Heart left ventricle (tissue), 16 donors: ENCODE measurements at regions of chr10 and their contacts with region 1.

Region 1: DNA sequence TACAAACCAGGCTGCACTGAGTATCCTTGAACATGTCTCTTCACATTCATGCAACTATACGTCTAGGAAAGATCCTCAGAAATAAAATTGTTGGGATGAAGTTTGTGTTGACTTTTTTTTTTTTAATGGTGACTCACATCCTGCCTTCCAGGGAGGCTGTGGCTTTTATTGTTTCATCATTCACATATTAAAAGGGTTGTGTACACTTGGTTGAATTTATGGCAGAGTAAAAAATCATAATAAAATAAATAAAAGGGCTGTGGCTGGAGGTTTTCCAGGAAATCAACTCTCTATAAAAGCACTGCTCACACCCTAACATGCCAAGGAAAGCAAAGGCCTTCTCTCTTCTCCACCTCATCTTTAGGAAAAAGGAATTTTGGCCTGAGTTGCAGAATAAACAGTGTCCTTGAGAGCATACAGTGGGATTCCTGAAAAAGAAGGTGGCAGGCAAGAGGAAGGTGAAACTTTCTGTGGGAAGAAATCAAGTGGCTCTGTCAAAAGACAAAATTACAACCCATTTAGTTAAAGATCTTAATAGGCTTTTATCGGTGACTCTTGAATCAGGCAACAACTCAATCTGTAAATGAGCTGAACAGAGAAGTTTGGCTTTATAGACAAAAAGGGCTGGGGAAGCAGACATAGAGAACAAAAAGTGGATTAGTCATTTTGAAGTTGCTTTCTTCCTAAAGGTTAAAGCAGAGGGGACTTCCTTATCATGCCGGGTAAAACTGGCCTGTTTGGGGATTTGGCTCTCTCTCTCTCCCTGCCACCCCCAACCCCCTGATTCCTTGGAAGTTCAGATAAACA is 41.6 kb upstream of the FHIP2A start:
- DNase-seq: no peak
- ATAC-seq: peak in 2 of 4 donors; percentile 38 to 70
- H3K4me3 ChIP-seq: no peak overlapping the region
- H3K27ac ChIP-seq: peak overlapping the region in 9 of 12 donors; percentile 7 to 50 (median 27)
- H3K4me1 ChIP-seq: peaks cover 0 to 37% (median 11%) of the 10 kb centered on the region in 12 donors
- H3K27me3 ChIP-seq: no peaks in the 10 kb centered on the region
- CTCF ChIP-seq: no peak
- POLR2A ChIP-seq: no peak

Region 2: DNA sequence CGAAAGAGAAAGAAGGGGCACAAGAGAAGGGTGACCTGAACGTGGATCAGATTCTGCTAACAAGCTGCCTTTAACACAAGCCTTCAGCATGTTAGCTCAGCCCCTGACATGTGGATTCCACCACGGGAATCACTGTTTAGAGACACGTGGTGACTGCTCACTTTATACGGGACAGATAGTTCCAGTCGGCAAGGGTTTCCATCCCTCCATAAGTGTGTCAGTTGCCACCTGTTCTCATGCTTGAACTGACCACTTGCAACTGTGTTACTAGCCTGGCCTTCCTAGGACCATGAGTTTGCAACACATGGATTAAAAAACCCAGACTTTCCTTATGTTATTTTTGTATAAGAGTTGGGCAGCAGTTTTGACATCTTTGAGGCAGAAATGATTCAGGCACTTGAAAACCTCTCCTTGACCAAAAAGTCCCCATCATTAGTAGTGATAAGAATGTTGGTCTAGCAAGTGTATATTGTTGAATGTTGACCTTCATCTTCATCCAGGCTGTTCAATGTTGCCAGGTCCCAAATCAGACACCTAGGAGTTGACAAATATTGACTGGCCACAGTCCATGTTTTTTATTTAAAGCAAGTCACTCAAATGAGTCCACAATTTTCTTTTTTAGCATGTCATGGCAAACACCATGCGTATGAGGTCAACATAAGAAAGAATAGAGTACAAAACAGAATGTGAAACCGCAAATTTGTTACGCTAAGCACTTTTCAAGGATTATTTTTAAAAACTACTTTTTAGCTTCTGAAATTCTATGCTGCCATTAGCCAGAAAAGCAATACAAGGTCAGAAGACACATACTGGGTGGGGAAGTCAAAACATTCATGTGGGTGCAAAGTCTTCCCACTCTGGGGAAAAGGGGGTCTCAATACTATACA is 223.5 kb before region 1 on chr10:
- intact Hi-C with region 1: loop called in 7 of 10 experiments (anchors 2 to 5 kb)
- DNase-seq: no peak
- ATAC-seq: peak; percentile 32 to 36 (median 35)
- H3K4me3 ChIP-seq: no peak overlapping the region
- H3K27ac ChIP-seq: peak overlapping the region; percentile 47 to 89 (median 70)
- H3K4me1 ChIP-seq: peaks cover 4 to 94% (median 52%) of the 10 kb centered on the region in 12 donors
- H3K27me3 ChIP-seq: no peaks in the 10 kb centered on the region
- CTCF ChIP-seq: no peak
- POLR2A ChIP-seq: no peak

Region 3: DNA sequence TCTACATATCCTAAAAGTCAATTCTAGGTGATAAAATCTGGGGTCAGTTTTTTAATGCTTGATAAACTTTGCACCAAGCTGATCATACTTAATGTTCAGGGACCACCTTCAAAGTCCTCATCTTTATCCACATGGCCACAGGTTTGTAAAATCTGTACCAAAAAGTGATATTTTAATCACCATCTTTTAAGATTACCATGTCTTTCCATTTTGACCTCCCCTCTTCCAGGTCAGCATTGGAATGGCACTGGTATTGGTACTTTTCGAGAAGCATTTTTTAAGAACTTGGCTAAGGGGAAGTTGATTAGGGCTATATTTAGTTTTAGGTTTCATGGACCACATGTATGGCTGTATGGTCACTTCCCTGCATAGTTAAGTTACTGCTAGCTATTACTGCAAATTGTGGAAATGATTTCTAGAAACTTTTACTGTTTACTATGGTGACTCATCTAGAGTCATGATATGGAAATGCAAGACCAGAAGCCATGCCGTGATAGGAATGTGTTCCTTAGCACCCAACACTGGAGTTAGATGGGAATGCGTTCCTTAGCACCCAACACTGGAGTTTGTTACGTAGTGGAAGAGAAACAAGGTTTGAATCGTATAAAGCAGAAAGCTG is 71.2 kb before region 1 on chr10:
- intact Hi-C with region 1: loop called in 3 of 10 experiments (anchors 5 kb)
- DNase-seq: no peak
- ATAC-seq: no peak
- H3K4me3 ChIP-seq: no peak overlapping the region
- H3K27ac ChIP-seq: peak overlapping the region in 5 of 12 donors; percentile 15 to 59 (median 27)
- H3K4me1 ChIP-seq: peaks cover 6 to 84% (median 33%) of the 10 kb centered on the region in 12 donors
- H3K27me3 ChIP-seq: no peaks in the 10 kb centered on the region
- CTCF ChIP-seq: no peak
- POLR2A ChIP-seq: no peak